Ovary (tissue), 10 donors: ENCODE measurements at regions of chr22 and their contacts with region 1.

Region 1: GRCh38 chr22:17262976-17263375 is 43.7 kb upstream of the ADA2 start:
- DNase-seq: no peak
- H3K4me3 ChIP-seq: no peak overlapping the region
- H3K27ac ChIP-seq: no peak overlapping the region
- H3K4me1 ChIP-seq: peaks cover 6% of the 10 kb centered on the region
- H3K27me3 ChIP-seq: no peaks in the 10 kb centered on the region
- CTCF ChIP-seq: no peak
- EP300 ChIP-seq: no peak
- POLR2A ChIP-seq: no peak

Region 2: GRCh38 chr22:17247832-17248231 is 15.1 kb before region 1 on chr22:
- intact Hi-C with region 1: loop called in 1 of 4 experiments (anchors 2 kb)
- DNase-seq: no peak
- H3K4me3 ChIP-seq: no peak overlapping the region
- H3K27ac ChIP-seq: no peak overlapping the region
- H3K4me1 ChIP-seq: no peaks in the 10 kb centered on the region
- H3K27me3 ChIP-seq: no peaks in the 10 kb centered on the region
- CTCF ChIP-seq: no peak
- EP300 ChIP-seq: no peak
- POLR2A ChIP-seq: no peak